Heart left ventricle (tissue), 16 donors: ENCODE measurements at regions of chr19 and their contacts with region 1.

Region 1: GRCh38 chr19:771332-771785 is 20.4 kb downstream of the MISP start:
- DNase-seq: no peak
- ATAC-seq: peak in 3 of 4 donors; percentile 41 to 66 (median 61)
- H3K4me3 ChIP-seq: no peak overlapping the region
- H3K27ac ChIP-seq: no peak overlapping the region
- H3K4me1 ChIP-seq: peaks cover 0 to 11% (median 0%) of the 10 kb centered on the region in 12 donors
- H3K27me3 ChIP-seq: no peaks in the 10 kb centered on the region
- CTCF ChIP-seq: peak; percentile 37 to 62 (median 54)
- POLR2A ChIP-seq: no peak

Region 2: DNA sequence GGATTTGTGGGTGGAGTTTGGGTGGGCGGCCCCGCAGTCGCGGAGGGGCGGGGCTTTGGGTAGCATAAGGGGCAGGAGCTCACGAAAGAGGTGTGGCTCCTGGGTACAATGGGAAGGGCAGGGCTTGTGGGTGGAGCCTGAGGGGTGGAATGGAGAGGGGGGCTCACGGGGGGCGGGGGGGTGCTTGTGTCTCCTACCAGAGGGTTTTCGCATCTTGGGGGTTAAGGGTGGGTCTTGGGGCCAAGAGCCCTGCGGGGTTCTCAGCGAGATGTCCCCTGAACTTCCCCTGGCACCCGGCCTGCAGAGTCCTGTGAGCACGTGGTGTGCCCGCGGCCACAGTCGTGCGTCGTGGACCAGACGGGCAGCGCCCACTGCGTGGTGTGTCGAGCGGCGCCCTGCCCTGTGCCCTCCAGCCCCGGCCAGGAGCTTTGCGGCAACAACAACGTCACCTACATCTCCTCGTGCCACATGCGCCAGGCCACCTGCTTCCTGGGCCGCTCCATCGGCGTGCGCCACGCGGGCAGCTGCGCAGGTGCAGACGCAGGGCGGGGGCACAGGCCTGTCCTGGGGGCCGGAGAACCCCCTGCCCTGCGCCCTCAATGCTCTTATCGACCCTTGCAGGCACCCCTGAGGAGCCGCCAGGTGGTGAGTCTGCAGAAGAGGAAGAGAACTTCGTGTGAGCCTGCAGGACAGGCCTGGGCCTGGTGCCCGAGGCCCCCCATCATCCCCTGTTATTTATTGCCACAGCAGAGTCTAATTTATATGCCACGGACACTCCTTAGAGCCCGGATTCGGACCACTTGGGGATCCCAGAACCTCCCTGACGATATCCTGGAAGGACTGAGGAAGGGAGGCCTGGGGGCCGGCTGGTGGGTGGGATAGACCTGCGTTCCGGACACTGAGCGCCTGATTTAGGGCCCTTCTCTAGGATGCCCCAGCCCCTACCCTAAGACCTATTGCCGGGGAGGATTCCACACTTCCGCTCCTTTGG is 90.0 kb before region 1 on chr19:
- intact Hi-C with region 1: no loop called
- DNase-seq: peak in 3 of 5 donors; percentile 89 to 94 (median 90)
- ATAC-seq: no peak
- H3K4me3 ChIP-seq: peak overlapping the region in 10 of 12 donors; percentile 51 to 96 (median 84)
- H3K27ac ChIP-seq: peak overlapping the region in 10 of 12 donors; percentile 71 to 99 (median 96)
- H3K4me1 ChIP-seq: peaks cover 4 to 44% (median 21%) of the 10 kb centered on the region in 12 donors
- H3K27me3 ChIP-seq: peaks cover 0 to 9% (median 0%) of the 10 kb centered on the region in 9 donors
- CTCF ChIP-seq: no peak
- POLR2A ChIP-seq: no peak

Region 3: DNA sequence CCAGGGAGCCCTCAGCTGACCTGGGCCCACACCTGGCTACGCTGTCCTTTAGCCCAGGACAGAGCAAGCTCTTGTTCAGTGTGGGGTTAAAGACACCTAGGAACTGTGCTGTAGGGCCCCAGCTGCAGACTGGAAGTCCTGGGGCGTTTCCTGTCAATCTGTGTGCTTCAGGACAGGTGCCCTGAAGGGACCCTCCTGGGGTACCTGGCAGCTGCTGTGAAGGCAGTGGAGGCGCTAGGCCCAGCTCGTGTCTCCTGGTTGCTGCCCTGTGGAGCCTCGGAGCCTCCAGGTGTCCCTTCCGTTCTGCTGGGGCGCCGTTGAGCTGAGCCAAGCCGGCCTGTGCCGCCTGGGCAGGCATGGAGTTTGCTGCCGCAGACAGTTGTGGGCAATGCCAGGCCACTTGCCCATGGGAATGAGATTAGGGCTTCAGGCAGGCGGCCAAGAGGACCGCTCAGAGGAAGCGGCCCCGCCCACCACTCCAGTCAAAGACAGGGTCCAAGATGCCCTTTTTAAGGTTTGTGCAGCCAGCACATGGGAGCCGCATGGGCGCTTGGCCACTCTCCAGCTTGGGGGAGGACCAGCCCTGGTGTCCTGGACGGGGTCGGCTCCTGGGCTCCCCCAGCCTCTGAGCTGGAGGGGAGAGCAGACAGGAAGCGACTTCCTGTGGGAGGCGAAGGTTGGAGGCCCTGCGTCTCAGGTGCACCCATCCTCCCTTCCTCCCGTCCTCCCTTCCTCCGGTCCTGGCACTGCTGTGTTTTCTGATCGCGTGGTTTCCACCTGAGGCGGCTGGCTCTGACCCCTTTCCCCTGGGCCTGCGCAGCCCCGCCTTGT is 29.9 kb after region 1 on chr19:
- intact Hi-C with region 1: no loop called
- DNase-seq: peak; percentile 82 to 92 (median 87)
- ATAC-seq: peak; percentile 30 to 48 (median 39)
- H3K4me3 ChIP-seq: peak overlapping the region in 11 of 12 donors; percentile 2 to 99 (median 89)
- H3K27ac ChIP-seq: peak overlapping the region in 11 of 12 donors; percentile 73 to 100 (median 99)
- H3K4me1 ChIP-seq: peaks cover 26 to 76% (median 59%) of the 10 kb centered on the region in 12 donors
- H3K27me3 ChIP-seq: no peaks in the 10 kb centered on the region
- CTCF ChIP-seq: no peak
- POLR2A ChIP-seq: no peak

Region 4: GRCh38 chr19:850221-850978 is 79.0 kb after region 1 on chr19:
- intact Hi-C with region 1: loop called in 7 of 10 experiments (anchors 5 to 10 kb)
- DNase-seq: peak; percentile 88 to 96 (median 94)
- ATAC-seq: peak; percentile 86 to 92 (median 92)
- H3K4me3 ChIP-seq: peak overlapping the region in 8 of 12 donors; percentile 0 to 26 (median 14)
- H3K27ac ChIP-seq: peak overlapping the region; percentile 1 to 90 (median 79)
- H3K4me1 ChIP-seq: peaks cover 0 to 30% (median 9%) of the 10 kb centered on the region in 12 donors
- H3K27me3 ChIP-seq: peaks cover 12 to 63% (median 24%) of the 10 kb centered on the region in 9 donors
- CTCF ChIP-seq: no peak
- POLR2A ChIP-seq: no peak

Region 5: GRCh38 chr19:907183-907853 is 136.0 kb after region 1 on chr19:
- intact Hi-C with region 1: loop called in 1 of 10 experiments (anchors 5 kb)
- DNase-seq: peak in 1 of 5 donors; percentile 14
- ATAC-seq: peak in 1 of 4 donors; percentile 31
- H3K4me3 ChIP-seq: no peak overlapping the region
- H3K27ac ChIP-seq: peak overlapping the region in 1 of 12 donors; percentile 87
- H3K4me1 ChIP-seq: peaks cover 0 to 43% (median 0%) of the 10 kb centered on the region in 12 donors
- H3K27me3 ChIP-seq: no peaks in the 10 kb centered on the region
- CTCF ChIP-seq: no peak
- POLR2A ChIP-seq: no peak

Region 6: DNA sequence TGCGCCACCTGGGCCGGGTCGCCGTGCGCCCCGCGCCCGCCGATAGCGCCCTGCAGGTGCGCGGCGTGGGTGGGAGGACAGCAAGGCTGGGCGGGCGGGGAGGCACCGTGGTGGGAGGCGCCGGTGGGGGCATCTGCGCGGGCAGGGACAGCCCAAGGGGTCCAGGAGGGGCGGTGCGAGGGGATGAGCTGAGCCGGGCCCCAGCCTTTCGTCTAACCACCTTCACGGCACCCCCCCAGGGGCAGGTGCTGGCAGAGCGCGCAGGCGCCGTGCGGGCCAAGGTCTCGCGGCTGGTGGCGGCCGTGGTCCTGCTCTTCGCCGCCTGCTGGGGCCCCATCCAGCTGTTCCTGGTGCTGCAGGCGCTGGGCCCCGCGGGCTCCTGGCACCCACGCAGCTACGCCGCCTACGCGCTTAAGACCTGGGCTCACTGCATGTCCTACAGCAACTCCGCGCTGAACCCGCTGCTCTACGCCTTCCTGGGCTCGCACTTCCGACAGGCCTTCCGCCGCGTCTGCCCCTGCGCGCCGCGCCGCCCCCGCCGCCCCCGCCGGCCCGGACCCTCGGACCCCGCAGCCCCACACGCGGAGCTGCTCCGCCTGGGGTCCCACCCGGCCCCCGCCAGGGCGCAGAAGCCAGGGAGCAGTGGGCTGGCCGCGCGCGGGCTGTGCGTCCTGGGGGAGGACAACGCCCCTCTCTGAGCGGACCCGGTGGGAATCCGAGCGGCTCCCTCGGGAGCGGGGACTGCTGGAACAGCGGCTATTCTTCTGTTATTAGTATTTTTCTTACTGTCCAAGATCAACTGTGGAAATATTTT is 148.9 kb after region 1 on chr19:
- intact Hi-C with region 1: loop called (anchors 1 to 2 kb)
- DNase-seq: no peak
- ATAC-seq: no peak
- H3K4me3 ChIP-seq: peak overlapping the region in 8 of 12 donors; percentile 5 to 51 (median 20)
- H3K27ac ChIP-seq: peak overlapping the region in 1 of 12 donors; percentile 37
- H3K4me1 ChIP-seq: peaks cover 7 to 61% (median 34%) of the 10 kb centered on the region in 12 donors
- H3K27me3 ChIP-seq: peaks cover 38 to 54% (median 48%) of the 10 kb centered on the region in 9 donors
- CTCF ChIP-seq: no peak
- POLR2A ChIP-seq: no peak

Region 7: GRCh38 chr19:984165-984967 is 213.0 kb after region 1 on chr19 and contains the start of gene WDR18:
- intact Hi-C with region 1: loop called (anchors 1 to 10 kb)
- DNase-seq: peak; percentile 94 to 97 (median 94)
- ATAC-seq: peak; percentile 87 to 97 (median 96)
- H3K4me3 ChIP-seq: peak within 1 kb of the TSS; percentile 80 to 100 (median 91)
- H3K27ac ChIP-seq: peak within 1 kb of the TSS; percentile 67 to 92 (median 86)
- H3K4me1 ChIP-seq: peaks cover 3 to 38% (median 19%) of the 10 kb centered on the region in 12 donors
- H3K27me3 ChIP-seq: no peaks in the 10 kb centered on the region
- CTCF ChIP-seq: peak in 8 of 12 donors; percentile 11 to 50 (median 34)
- POLR2A ChIP-seq: peak in 1 of 2 donors; percentile 57
- total RNA-seq, gene WDR18: 15.6 to 36.3 (median 19.2) TPM